ENCODE measurements at regions of chr10 and their contacts with region 1.

Region 1: DNA sequence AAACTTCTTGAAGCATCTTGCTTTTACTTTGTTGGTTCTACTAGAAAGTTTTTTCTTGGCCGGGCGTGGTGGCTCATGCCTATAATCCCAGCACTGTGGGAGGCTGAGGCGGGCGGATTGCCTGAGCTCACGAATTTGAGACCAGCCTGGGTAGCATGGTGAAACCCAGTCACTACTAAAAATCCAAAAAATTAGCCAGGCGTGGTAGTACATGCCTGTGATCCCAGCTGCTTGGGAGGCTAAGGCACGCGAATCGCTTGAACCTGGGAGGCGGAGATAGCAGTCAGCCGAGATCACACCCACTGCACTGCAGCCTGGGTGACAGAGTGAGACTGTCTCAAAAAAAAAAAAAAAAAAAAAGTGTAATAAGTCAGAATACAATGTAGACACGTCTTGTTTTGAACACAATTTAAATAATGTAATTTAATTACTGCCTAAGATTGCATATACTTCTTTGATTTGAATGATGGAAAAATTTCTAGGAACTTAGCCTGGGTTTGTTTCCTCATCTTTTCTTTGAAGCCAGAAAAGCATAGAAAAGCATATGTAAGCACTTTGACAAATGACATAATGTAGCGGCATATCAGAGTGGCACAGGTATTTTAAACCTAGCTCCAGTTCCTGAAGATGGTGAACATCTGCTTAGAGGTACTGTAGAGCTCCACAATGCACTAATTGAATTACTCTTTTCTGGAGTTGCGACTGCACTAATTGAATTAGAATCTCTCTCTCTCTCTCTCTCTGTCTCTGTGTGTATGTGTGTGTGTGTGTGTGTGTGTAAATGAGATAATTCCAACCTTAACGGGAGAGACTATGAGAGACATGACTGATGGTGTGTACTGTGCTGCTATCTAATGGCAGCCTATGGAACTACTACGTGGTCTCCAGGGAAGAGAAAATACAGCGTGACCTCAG is 87.8 kb downstream of the BTRC start:
- DNase-seq: peak; percentile 39
- ATAC-seq: peak; percentile 95
- H3K4me3 Mint-ChIP-seq: no peak overlapping the region
- H3K27ac Mint-ChIP-seq: no peak overlapping the region
- H3K4me1 Mint-ChIP-seq: peaks cover 2% of the 10 kb centered on the region
- H3K27me3 Mint-ChIP-seq: no peaks in the 10 kb centered on the region

Region 2: GRCh38 chr10:101161494-101162299 is 280.1 kb before region 1 on chr10:
- CTCF ChIA-PET with region 1: interaction called, 4 read pairs
- POLR2A ChIA-PET with region 1: no interaction called
- intact Hi-C with region 1: loop called in 1 of 2 experiments (anchors 5 kb)
- DNase-seq: peak; percentile 85
- ATAC-seq: peak; percentile 83
- H3K4me3 Mint-ChIP-seq: no peak overlapping the region
- H3K27ac Mint-ChIP-seq: no peak overlapping the region
- H3K4me1 Mint-ChIP-seq: peaks cover 10% of the 10 kb centered on the region
- H3K27me3 Mint-ChIP-seq: peaks cover 54% of the 10 kb centered on the region

Region 3: GRCh38 chr10:101291331-101292193 is 150.2 kb before region 1 on chr10:
- CTCF ChIA-PET with region 1: interaction called, 11 read pairs
- POLR2A ChIA-PET with region 1: no interaction called
- intact Hi-C with region 1: no loop called
- DNase-seq: peak; percentile 73
- ATAC-seq: peak; percentile 69
- H3K4me3 Mint-ChIP-seq: peak overlapping the region; percentile 59
- H3K27ac Mint-ChIP-seq: no peak overlapping the region
- H3K4me1 Mint-ChIP-seq: peaks cover 3% of the 10 kb centered on the region
- H3K27me3 Mint-ChIP-seq: peaks cover 66% of the 10 kb centered on the region

Region 4: GRCh38 chr10:101453791-101454718 is 12.3 kb after region 1 on chr10:
- CTCF ChIA-PET with region 1: interaction called, 12 read pairs
- POLR2A ChIA-PET with region 1: interaction called, 3 read pairs
- intact Hi-C with region 1: no loop called
- DNase-seq: no peak
- ATAC-seq: peak; percentile 44
- H3K4me3 Mint-ChIP-seq: no peak overlapping the region
- H3K27ac Mint-ChIP-seq: no peak overlapping the region
- H3K4me1 Mint-ChIP-seq: peaks cover 30% of the 10 kb centered on the region
- H3K27me3 Mint-ChIP-seq: no peaks in the 10 kb centered on the region

Region 5: DNA sequence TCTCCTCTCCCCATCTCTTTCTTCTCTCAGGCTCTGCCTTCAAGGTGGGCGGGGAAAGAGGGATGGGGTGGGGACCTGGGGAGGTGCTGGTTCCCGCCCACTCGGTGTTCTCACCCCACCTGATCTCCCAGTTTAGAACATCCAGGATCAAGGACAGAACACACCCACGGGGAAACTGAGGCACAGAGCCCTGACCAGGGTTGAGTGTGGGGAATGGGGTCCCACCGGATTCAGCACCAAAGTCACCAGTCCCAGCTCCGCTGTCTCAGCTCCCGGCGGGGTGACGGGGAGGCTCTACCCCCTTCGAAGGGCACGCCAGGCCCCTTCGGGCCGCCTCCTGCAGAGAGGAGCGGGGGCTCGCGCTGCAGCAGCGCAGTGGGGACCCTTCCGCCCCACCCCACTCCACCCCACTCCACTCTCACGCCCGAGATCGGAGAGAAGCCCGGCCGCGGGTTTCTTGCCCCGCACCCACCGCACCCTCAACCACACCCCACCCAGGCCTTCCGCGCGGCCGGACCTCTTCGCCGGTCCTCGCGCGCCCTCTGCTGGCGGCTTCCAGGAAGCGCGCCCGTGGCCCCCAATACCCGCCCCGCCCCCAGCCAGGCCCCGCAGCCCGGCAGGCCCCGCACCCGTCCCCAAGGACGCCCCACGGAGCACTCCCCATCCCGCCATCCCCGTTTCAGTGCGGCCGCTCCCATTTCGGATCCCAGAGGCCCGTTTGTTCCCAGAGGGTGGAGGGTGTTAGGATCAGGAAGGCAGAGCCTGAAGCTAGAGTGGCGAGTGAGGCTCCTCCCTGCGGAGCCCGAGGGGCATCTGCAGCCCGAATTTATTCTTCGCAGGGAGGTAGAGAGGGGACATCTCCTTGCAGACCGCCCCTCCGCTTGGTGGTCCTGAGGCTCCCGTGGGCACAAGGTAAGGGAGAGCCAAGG is 128.3 kb after region 1 on chr10:
- CTCF ChIA-PET with region 1: interaction called, 4 read pairs
- POLR2A ChIA-PET with region 1: no interaction called
- intact Hi-C with region 1: loop called in 1 of 2 experiments (anchors 1 kb)
- DNase-seq: peak; percentile 91
- ATAC-seq: peak; percentile 79
- H3K4me3 Mint-ChIP-seq: peak overlapping the region; percentile 62
- H3K27ac Mint-ChIP-seq: no peak overlapping the region
- H3K4me1 Mint-ChIP-seq: peaks cover 18% of the 10 kb centered on the region
- H3K27me3 Mint-ChIP-seq: peaks cover 40% of the 10 kb centered on the region

Region 6: DNA sequence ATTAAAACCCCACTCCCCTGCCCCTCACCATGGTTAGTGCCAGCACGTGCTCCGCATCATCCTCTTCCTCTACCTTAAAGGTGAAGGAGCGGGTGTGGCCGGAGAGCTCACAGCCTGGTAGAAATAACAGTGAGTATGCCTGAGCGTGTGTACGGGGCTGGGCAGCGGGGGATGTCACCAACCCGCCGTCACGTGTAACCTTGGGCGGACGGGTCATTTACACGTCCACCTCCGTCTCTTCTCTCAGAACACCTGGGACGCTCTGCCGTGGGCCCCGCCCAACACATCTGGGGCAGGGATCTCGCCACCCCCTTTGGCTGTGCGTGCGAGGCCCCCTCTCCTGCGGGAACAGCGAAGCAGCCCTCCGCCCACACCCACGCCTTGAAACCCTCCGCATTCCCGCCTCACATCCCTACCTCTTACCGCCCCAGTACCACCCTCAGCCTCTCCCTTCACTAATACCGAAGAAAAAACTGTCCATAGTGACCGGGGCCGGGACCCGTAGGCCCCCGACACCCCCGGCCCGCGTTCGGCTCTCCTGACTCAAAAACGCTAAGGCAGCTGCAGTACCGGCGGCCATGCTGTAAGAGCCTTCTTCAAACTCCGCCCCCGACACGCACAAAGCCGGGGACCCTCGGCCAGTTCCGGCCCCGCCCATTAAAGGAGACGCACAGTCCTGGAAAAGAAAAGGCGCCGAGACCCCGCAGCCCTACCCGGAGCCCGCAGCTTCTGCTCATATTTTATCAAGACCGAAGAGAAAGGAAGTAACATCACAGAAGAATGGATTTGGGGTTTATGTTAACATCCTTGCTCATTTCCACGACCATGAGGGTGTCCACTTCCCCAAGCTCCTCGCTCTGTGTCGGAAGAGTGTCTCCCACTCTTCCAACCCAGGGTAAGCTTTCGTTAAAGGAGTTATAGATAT is 341.3 kb after region 1 on chr10 and contains the start of gene NPM3:
- CTCF ChIA-PET with region 1: no interaction called
- POLR2A ChIA-PET with region 1: no interaction called
- intact Hi-C with region 1: no loop called
- DNase-seq: peak; percentile 94
- ATAC-seq: peak; percentile 82
- H3K4me3 Mint-ChIP-seq: peak within 1 kb of the TSS; percentile 94
- H3K27ac Mint-ChIP-seq: peak within 1 kb of the TSS; percentile 97
- H3K4me1 Mint-ChIP-seq: peaks cover 52% of the 10 kb centered on the region
- H3K27me3 Mint-ChIP-seq: peaks cover 6% of the 10 kb centered on the region
- total RNA-seq, gene NPM3: 207 to 214 TPM

Region 7: GRCh38 chr10:102274062-102274461 is 832.3 kb after region 1 on chr10:
- CTCF ChIA-PET with region 1: no interaction called
- POLR2A ChIA-PET with region 1: no interaction called
- intact Hi-C with region 1: no loop called
- DNase-seq: no peak
- ATAC-seq: no peak
- H3K4me3 Mint-ChIP-seq: no peak overlapping the region
- H3K27ac Mint-ChIP-seq: no peak overlapping the region
- H3K4me1 Mint-ChIP-seq: peaks cover 28% of the 10 kb centered on the region
- H3K27me3 Mint-ChIP-seq: no peaks in the 10 kb centered on the region

Measured in activated CD4-positive, alpha-beta T cell treated with anti-CD3 and anti-CD28 coated beads for 36 hours (primary cell).